IMR-90 (cell line): ENCODE measurements at regions of chr17 and their contacts with region 1.

Region 1: GRCh38 chr17:43778337-43779144 is at the start of gene DUSP3:
- DNase-seq: peak; percentile 91
- ATAC-seq: peak; percentile 96
- H3K4me3 ChIP-seq: peak within 1 kb of the TSS; percentile 67
- H3K27ac ChIP-seq: peak within 1 kb of the TSS; percentile 85
- H3K4me1 ChIP-seq: peaks cover 4% of the 10 kb centered on the region
- H3K27me3 ChIP-seq: no peaks in the 10 kb centered on the region
- CTCF ChIP-seq: no peak
- POLR2A ChIP-seq: peak; percentile 89
- RAD21 ChIP-seq: no peak
- total RNA-seq, gene DUSP3: 40.9 and 42.5 TPM in 2 replicates

Region 2: DNA sequence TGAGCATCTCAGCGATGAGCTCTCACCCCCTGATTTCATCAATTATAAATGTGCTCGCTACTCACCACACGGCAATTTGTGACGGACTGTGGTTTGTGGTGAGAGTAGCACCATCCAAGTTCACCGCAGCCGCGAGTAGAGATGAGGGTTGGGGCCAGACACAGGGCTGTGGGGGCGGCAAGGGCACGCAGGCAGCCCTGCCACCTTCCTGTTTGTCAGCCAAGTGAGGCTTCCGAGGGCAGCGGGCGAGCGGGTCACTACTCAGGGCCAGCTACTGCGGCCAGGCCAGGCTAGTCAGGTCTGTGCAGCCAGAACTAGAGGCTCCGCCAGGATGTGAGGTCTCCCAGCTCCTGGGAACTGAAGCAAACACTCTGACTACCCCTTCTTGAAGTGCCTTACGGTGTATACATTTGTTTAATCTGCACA is 77.2 kb before region 1 on chr17:
- CTCF ChIA-PET with region 1: no interaction called
- POLR2A ChIA-PET with region 1: interaction called, 18 read pairs
- dilution Hi-C with region 1: no loop called
- in situ Hi-C with region 1: no loop called
- intact Hi-C with region 1: no loop called
- DNase-seq: peak; percentile 76
- ATAC-seq: peak; percentile 59
- H3K4me3 ChIP-seq: no peak overlapping the region
- H3K27ac ChIP-seq: no peak overlapping the region
- H3K4me1 ChIP-seq: peaks cover 5% of the 10 kb centered on the region; the same call in 1 of the 2 replicates
- H3K27me3 ChIP-seq: peaks cover 10% of the 10 kb centered on the region
- CTCF ChIP-seq: no peak
- POLR2A ChIP-seq: no peak
- RAD21 ChIP-seq: no peak

Region 3: GRCh38 chr17:43720311-43721060 is 58.1 kb before region 1 on chr17:
- CTCF ChIA-PET with region 1: no interaction called
- POLR2A ChIA-PET with region 1: no interaction called
- dilution Hi-C with region 1: no loop called
- in situ Hi-C with region 1: no loop called
- intact Hi-C with region 1: no loop called
- DNase-seq: peak; percentile 43
- ATAC-seq: peak; percentile 97
- H3K4me3 ChIP-seq: peak overlapping the region; percentile 53
- H3K27ac ChIP-seq: peak overlapping the region; percentile 53
- H3K4me1 ChIP-seq: peaks cover 12% of the 10 kb centered on the region
- H3K27me3 ChIP-seq: no peaks in the 10 kb centered on the region
- CTCF ChIP-seq: no peak
- POLR2A ChIP-seq: no peak
- RAD21 ChIP-seq: no peak

Region 4: GRCh38 chr17:43832976-43833829 is 54.7 kb after region 1 on chr17 and contains the start of gene MPP3:
- CTCF ChIA-PET with region 1: no interaction called
- POLR2A ChIA-PET with region 1: no interaction called
- dilution Hi-C with region 1: no loop called
- in situ Hi-C with region 1: no loop called
- intact Hi-C with region 1: loop called (anchors 2 kb)
- DNase-seq: peak; percentile 59
- ATAC-seq: peak; percentile 97
- H3K4me3 ChIP-seq: peak within 1 kb of the TSS; percentile 86
- H3K27ac ChIP-seq: peak within 1 kb of the TSS; percentile 70; the same call in 1 of the 2 replicates
- H3K4me1 ChIP-seq: peaks cover 5% of the 10 kb centered on the region
- H3K27me3 ChIP-seq: no peaks in the 10 kb centered on the region
- CTCF ChIP-seq: no peak
- POLR2A ChIP-seq: peak; percentile 85
- RAD21 ChIP-seq: no peak
- total RNA-seq, gene MPP3: 5.0 and 5.7 TPM in 2 replicates